IMR-90 (cell line): ENCODE measurements at regions of chr12 and their contacts with region 1.

Region 1: GRCh38 chr12:72346363-72346944 is 74.3 kb downstream of the TRHDE start:
- DNase-seq: peak; percentile 85
- ATAC-seq: peak; percentile 98
- H3K4me3 ChIP-seq: no peak overlapping the region
- H3K27ac ChIP-seq: no peak overlapping the region
- H3K4me1 ChIP-seq: peaks cover 4% of the 10 kb centered on the region
- H3K27me3 ChIP-seq: no peaks in the 10 kb centered on the region
- CTCF ChIP-seq: peak; percentile 71
- POLR2A ChIP-seq: no peak
- RAD21 ChIP-seq: peak; percentile 82

Region 2: GRCh38 chr12:72017054-72017651 is 329.3 kb before region 1 on chr12:
- CTCF ChIA-PET with region 1: no interaction called
- POLR2A ChIA-PET with region 1: no interaction called
- dilution Hi-C with region 1: no loop called
- in situ Hi-C with region 1: no loop called
- intact Hi-C with region 1: loop called (anchors 10 kb)
- DNase-seq: peak; percentile 72
- ATAC-seq: peak; percentile 100
- H3K4me3 ChIP-seq: no peak overlapping the region
- H3K27ac ChIP-seq: no peak overlapping the region
- H3K4me1 ChIP-seq: peaks cover under 1% of the 10 kb centered on the region; the same call in 1 of the 2 replicates
- H3K27me3 ChIP-seq: no peaks in the 10 kb centered on the region
- CTCF ChIP-seq: peak; percentile 79
- POLR2A ChIP-seq: no peak
- RAD21 ChIP-seq: peak; percentile 89

Region 3: GRCh38 chr12:72432037-72432604 is 85.7 kb after region 1 on chr12:
- CTCF ChIA-PET with region 1: no interaction called
- POLR2A ChIA-PET with region 1: no interaction called
- dilution Hi-C with region 1: no loop called
- in situ Hi-C with region 1: no loop called
- intact Hi-C with region 1: no loop called
- DNase-seq: no peak
- ATAC-seq: no peak
- H3K4me3 ChIP-seq: no peak overlapping the region
- H3K27ac ChIP-seq: no peak overlapping the region
- H3K4me1 ChIP-seq: no peaks in the 10 kb centered on the region
- H3K27me3 ChIP-seq: no peaks in the 10 kb centered on the region
- CTCF ChIP-seq: no peak
- POLR2A ChIP-seq: no peak
- RAD21 ChIP-seq: no peak

Region 4: GRCh38 chr12:72673853-72674252 is 327.4 kb after region 1 on chr12:
- CTCF ChIA-PET with region 1: interaction called, 5 read pairs
- POLR2A ChIA-PET with region 1: no interaction called
- dilution Hi-C with region 1: no loop called
- in situ Hi-C with region 1: no loop called
- intact Hi-C with region 1: loop called (anchors 10 kb)
- DNase-seq: no peak
- ATAC-seq: no peak
- H3K4me3 ChIP-seq: no peak overlapping the region
- H3K27ac ChIP-seq: no peak overlapping the region
- H3K4me1 ChIP-seq: peaks cover 1% of the 10 kb centered on the region; the same call in 1 of the 2 replicates
- H3K27me3 ChIP-seq: no peaks in the 10 kb centered on the region
- CTCF ChIP-seq: no peak
- POLR2A ChIP-seq: no peak
- RAD21 ChIP-seq: no peak